Ovary (tissue), 10 donors: ENCODE measurements at regions of chr1 and their contacts with region 1.

Region 1: GRCh38 chr1:27862651-27863537 is 9.4 kb upstream of the THEMIS2 start:
- DNase-seq: no peak
- H3K4me3 ChIP-seq: no peak overlapping the region
- H3K27ac ChIP-seq: no peak overlapping the region
- H3K4me1 ChIP-seq: no peaks in the 10 kb centered on the region
- H3K27me3 ChIP-seq: no peaks in the 10 kb centered on the region
- CTCF ChIP-seq: no peak
- EP300 ChIP-seq: no peak
- POLR2A ChIP-seq: no peak

Region 2: DNA sequence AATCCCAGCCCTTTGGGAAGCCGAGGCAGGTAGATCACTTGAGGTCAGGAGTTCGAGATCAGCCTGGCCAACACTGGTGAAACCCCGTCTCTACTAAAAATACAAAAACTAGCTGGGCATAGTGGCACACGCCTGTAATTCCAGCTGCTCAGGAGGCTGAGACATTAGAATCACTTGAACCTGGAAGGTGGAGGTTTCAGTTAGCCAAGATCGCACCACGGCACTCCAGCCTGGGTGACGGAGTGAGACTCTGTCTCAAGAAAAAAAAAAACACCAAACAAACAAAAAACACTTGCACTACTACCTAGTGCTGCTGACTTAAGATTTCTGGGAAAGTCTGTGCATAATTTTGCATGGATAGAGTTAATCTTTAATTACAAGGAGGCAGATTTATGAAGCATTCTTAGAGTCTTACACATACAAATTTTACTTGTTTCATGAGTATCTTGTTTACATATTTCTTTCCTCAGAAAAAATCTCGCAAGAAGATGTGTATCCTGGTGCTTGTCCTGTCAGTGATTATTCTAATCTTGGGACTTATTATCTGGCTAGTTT is 41.1 kb before region 1 on chr1:
- intact Hi-C with region 1: no loop called
- DNase-seq: no peak
- H3K4me3 ChIP-seq: no peak overlapping the region
- H3K27ac ChIP-seq: no peak overlapping the region
- H3K4me1 ChIP-seq: no peaks in the 10 kb centered on the region
- H3K27me3 ChIP-seq: no peaks in the 10 kb centered on the region
- CTCF ChIP-seq: no peak
- EP300 ChIP-seq: no peak
- POLR2A ChIP-seq: no peak

Region 3: GRCh38 chr1:27979151-27979858 is 116.4 kb after region 1 on chr1:
- intact Hi-C with region 1: loop called in 1 of 4 experiments (anchors 10 kb)
- DNase-seq: no peak
- H3K4me3 ChIP-seq: no peak overlapping the region
- H3K27ac ChIP-seq: no peak overlapping the region
- H3K4me1 ChIP-seq: no peaks in the 10 kb centered on the region
- H3K27me3 ChIP-seq: no peaks in the 10 kb centered on the region
- CTCF ChIP-seq: peak in 2 of 3 donors; percentile 48 to 53
- EP300 ChIP-seq: no peak
- POLR2A ChIP-seq: no peak